Right cardiac atrium (tissue), 5 donors: ENCODE measurements at regions of chr12 and their contacts with region 1.

Region 1: GRCh38 chr12:46661110-46661845 is 164.5 kb downstream of the SLC38A4 start:
- DNase-seq: no peak
- ATAC-seq: peak; percentile 86 to 91
- H3K4me3 ChIP-seq: no peak overlapping the region
- H3K27ac ChIP-seq: no peak overlapping the region
- H3K4me1 ChIP-seq: peaks cover 4% of the 10 kb centered on the region
- H3K27me3 ChIP-seq: no peaks in the 10 kb centered on the region

Region 2: DNA sequence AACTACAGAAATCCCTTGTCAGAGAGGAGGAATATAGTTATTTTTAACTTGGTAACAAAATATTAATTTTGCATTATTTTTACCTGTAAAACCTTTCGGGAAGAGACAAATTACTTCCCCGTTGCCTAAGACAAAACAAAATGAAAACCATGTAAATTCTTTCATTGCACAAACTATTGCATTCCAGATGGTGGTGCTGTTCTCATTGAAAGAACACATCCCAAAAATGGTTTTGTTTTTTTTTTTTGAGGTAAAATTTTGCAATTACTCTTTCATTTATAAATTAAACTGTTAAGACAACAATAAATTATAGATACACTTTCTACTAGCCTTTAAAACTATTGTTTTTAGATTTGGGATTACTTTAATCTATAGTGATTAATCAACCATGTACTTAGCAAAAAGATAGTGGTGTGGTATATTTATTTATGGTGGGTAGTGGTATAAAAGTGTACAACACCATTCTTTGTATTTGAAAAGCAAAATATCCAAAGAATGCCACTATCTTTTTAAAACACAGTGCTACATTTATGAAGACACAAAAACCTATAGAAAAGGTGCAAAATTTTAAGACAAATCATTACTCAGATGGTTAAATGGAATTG is 507.9 kb before region 1 on chr12:
- intact Hi-C with region 1: loop called in 1 of 4 experiments (anchors 10 kb)
- DNase-seq: no peak
- ATAC-seq: no peak
- H3K4me3 ChIP-seq: no peak overlapping the region
- H3K27ac ChIP-seq: no peak overlapping the region
- H3K4me1 ChIP-seq: no peaks in the 10 kb centered on the region
- H3K27me3 ChIP-seq: no peaks in the 10 kb centered on the region

Region 3: DNA sequence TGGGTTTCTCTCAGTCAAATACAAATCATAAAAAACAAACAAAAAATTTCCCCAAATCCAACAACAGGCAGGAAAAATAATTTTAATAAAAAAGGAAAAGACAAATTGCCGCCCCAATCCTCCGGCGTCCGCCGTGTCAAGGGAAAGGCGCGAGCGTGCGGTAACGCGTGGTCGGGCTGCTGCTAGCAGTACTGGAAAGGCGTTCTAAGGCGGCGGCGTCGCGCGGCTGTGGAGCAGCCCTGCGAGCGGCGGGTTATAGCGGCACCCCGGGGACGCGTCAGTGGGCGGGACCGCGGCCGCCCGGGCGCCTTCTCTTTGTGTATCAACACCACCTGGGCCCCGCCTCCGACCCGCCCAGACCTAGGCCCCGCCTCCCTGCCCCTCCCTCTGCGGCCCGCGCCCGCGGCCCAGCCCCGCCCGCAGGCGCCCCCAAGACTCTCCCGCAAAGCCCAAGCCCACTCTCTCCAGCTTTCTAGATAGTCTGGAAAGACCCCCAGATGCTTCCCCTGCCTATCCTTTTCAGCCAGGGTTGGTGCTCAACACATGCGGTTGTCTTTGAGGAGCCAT is 288.7 kb before region 1 on chr12 and contains the start of gene SLC38A2:
- intact Hi-C with region 1: loop called in 3 of 4 experiments (anchors 5 to 10 kb)
- DNase-seq: peak; percentile 98 to 100 (median 99)
- ATAC-seq: peak; percentile 97 to 98
- H3K4me3 ChIP-seq: peak within 1 kb of the TSS; percentile 87
- H3K27ac ChIP-seq: peak within 1 kb of the TSS; percentile 97
- H3K4me1 ChIP-seq: peaks cover 9% of the 10 kb centered on the region
- H3K27me3 ChIP-seq: no peaks in the 10 kb centered on the region
- total RNA-seq, gene SLC38A2: 87.3 to 143 (median 115) TPM

Region 4: DNA sequence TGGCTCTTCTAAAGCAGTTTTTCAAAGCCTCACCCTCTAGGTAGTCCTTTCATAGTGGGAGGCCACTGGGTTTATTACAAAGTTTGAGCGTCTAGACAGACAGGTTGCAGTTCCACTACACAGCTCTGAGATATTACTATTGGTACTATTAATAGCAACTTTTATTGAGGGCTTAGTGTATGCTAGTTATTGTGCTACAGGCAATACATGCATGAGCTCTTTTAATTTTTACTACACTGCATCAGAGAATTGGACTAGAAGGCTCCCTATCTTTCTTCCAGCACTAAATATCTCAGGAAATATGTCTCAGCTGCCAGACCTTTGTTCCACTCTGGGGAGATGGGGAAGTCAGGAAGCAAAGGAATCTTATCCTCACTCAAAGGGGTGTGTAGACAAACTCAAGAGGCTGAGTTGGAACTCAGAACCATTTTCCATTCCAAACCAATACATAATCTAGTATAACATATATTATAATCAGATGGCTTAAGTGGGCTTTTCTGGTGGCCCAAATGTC is 126.9 kb before region 1 on chr12:
- intact Hi-C with region 1: loop called in 1 of 4 experiments (anchors 10 kb)
- DNase-seq: no peak
- ATAC-seq: peak; percentile 79 to 87
- H3K4me3 ChIP-seq: no peak overlapping the region
- H3K27ac ChIP-seq: no peak overlapping the region
- H3K4me1 ChIP-seq: peaks cover 8% of the 10 kb centered on the region
- H3K27me3 ChIP-seq: no peaks in the 10 kb centered on the region

Region 5: DNA sequence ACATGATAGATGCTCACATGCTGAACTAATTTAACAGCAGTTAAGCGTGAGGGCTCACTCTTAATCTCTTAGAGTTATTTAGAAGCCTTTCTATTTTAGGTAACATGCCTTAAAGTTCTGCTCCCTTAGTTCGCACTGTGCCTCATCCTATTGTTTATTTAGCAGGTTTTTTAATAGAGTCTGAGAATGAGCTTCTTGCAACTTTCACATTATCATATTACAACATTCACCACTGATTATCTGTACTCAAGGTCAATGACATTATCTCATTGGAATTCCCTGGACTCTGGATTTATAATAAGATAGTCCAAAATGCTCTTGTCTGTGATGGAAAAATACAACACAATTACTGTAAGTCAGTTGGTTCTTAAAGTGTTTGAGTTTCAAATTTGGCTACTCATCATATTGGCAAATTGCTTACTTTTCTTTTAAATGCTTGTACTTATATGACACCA is 105.1 kb before region 1 on chr12:
- intact Hi-C with region 1: loop called in 1 of 4 experiments (anchors 5 kb)
- DNase-seq: no peak
- ATAC-seq: peak; percentile 82 to 86
- H3K4me3 ChIP-seq: no peak overlapping the region
- H3K27ac ChIP-seq: no peak overlapping the region
- H3K4me1 ChIP-seq: no peaks in the 10 kb centered on the region
- H3K27me3 ChIP-seq: no peaks in the 10 kb centered on the region